ENCODE measurements at regions of chr13 and their contacts with region 1.

Region 1: GRCh38 chr13:55245005-55245644 is 1895.6 kb upstream of the PRR20A start:
- DNase-seq: peak; percentile 46 to 66
- H3K4me3 ChIP-seq: no peak overlapping the region
- H3K27ac ChIP-seq: no peak overlapping the region
- H3K4me1 ChIP-seq: peaks cover 0 to 8% (median 3%) of the 10 kb centered on the region in 4 experiments; a peak in 5 of 7 replicates
- H3K27me3 ChIP-seq: no peaks in the 10 kb centered on the region
- CTCF ChIP-seq: peak; percentile 52 to 88 (median 77)
- EP300 ChIP-seq: no peak
- POLR2A ChIP-seq: no peak
- RAD21 ChIP-seq: peak; percentile 96 to 97

Region 2: DNA sequence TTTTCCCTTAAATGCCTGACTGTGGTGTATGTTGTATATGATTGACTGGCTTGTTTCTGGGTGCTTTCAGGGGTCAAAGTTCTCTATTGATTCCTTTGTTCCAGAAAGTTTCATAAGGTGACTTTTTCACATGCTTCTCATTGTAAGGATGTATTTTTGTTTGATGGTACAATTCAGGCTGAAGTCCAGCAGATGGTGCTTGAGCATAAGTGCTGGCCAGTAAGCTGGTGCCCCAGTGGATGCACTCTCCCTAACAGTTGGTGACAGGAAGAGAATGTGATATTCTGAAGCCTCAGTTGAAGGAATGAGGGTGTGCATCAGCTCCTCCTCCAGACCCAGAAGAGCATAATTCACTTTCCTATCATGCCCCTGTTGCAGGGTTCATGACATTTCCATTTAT is 46.0 kb before region 1 on chr13:
- CTCF ChIA-PET with region 1: interaction called, 12 read pairs
- POLR2A ChIA-PET with region 1: no interaction called
- DNase-seq: no peak
- H3K4me3 ChIP-seq: no peak overlapping the region
- H3K27ac ChIP-seq: no peak overlapping the region
- H3K4me1 ChIP-seq: peaks cover 0 to 3% (median 0%) of the 10 kb centered on the region in 4 experiments; a peak in 1 of 7 replicates
- H3K27me3 ChIP-seq: no peaks in the 10 kb centered on the region
- CTCF ChIP-seq: peak in 2 of 3 experiments; percentile 28 to 38; a peak in 3 of 4 replicates
- EP300 ChIP-seq: no peak
- POLR2A ChIP-seq: no peak
- RAD21 ChIP-seq: peak; percentile 51 to 63; a peak in 3 of 4 replicates

Region 3: GRCh38 chr13:55230570-55230908 is 14.6 kb before region 1 on chr13:
- CTCF ChIA-PET with region 1: interaction called, 14 read pairs
- POLR2A ChIA-PET with region 1: no interaction called
- DNase-seq: no peak
- H3K4me3 ChIP-seq: no peak overlapping the region
- H3K27ac ChIP-seq: no peak overlapping the region
- H3K4me1 ChIP-seq: peaks cover 0 to 4% (median 0%) of the 10 kb centered on the region in 4 experiments; a peak in 3 of 7 replicates
- H3K27me3 ChIP-seq: no peaks in the 10 kb centered on the region
- CTCF ChIP-seq: peak in 2 of 3 experiments; percentile 36 to 50; a peak in 3 of 4 replicates
- EP300 ChIP-seq: no peak
- POLR2A ChIP-seq: no peak
- RAD21 ChIP-seq: peak; percentile 64 to 75

Region 4: GRCh38 chr13:55263045-55263444 is 17.9 kb after region 1 on chr13:
- CTCF ChIA-PET with region 1: interaction called, 12 read pairs
- POLR2A ChIA-PET with region 1: no interaction called
- DNase-seq: no peak
- H3K4me3 ChIP-seq: no peak overlapping the region
- H3K27ac ChIP-seq: no peak overlapping the region
- H3K4me1 ChIP-seq: peaks cover 0 to 5% (median 3%) of the 10 kb centered on the region in 4 experiments; a peak in 5 of 7 replicates
- H3K27me3 ChIP-seq: no peaks in the 10 kb centered on the region
- CTCF ChIP-seq: no peak
- EP300 ChIP-seq: no peak
- POLR2A ChIP-seq: no peak
- RAD21 ChIP-seq: no peak